A673 (cell line): ENCODE measurements at regions of chr20 and their contacts with region 1.

Region 1: GRCh38 chr20:12970372-12970821 is 38.4 kb upstream of the SPTLC3 start:
- DNase-seq: peak; percentile 50
- H3K4me3 ChIP-seq: no peak overlapping the region
- H3K27ac ChIP-seq: no peak overlapping the region
- H3K4me1 ChIP-seq: no peaks in the 10 kb centered on the region
- H3K27me3 ChIP-seq: no peaks in the 10 kb centered on the region
- CTCF ChIP-seq: peak; percentile 58

Region 2: GRCh38 chr20:13022401-13023155 is 52.2 kb after region 1 on chr20:
- CTCF ChIA-PET with region 1: no interaction called
- POLR2A ChIA-PET with region 1: no interaction called
- intact Hi-C with region 1: no loop called
- DNase-seq: no peak
- H3K4me3 ChIP-seq: no peak overlapping the region
- H3K27ac ChIP-seq: no peak overlapping the region
- H3K4me1 ChIP-seq: no peaks in the 10 kb centered on the region
- H3K27me3 ChIP-seq: no peaks in the 10 kb centered on the region
- CTCF ChIP-seq: no peak

Region 3: DNA sequence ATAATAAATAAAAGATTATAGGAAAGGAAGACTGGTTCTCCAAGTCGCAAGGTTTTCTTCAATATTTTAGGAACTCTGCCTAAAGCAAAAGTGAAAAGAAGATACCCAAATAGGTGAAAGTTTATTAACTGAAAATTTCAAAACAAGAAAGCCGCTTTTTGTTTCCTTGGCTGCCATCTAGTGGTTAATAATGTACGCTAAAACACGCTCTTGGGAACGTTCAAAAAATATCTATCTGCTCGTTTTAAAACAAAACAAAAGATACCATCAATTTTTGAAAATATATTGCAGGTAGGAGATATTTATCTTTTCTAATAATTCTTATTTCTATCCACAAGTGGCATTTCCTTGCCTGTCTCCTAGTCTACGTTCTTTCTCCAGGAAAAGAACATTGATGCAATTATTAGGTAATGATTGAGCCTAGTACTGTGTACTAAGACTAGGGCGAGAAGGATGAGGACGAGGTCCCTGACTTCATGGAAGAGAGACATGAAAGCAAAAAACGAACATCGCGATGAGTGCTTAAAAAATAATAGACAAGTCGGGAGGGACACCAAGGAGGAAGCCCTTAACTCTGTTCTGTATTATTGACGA is 135.6 kb after region 1 on chr20:
- CTCF ChIA-PET with region 1: no interaction called
- POLR2A ChIA-PET with region 1: no interaction called
- intact Hi-C with region 1: loop called (anchors 1 kb)
- DNase-seq: peak; percentile 56
- H3K4me3 ChIP-seq: no peak overlapping the region
- H3K27ac ChIP-seq: no peak overlapping the region
- H3K4me1 ChIP-seq: peaks cover 10% of the 10 kb centered on the region
- H3K27me3 ChIP-seq: no peaks in the 10 kb centered on the region
- CTCF ChIP-seq: peak; percentile 78

Region 4: GRCh38 chr20:13261460-13262301 is 291.3 kb after region 1 on chr20:
- CTCF ChIA-PET with region 1: no interaction called
- POLR2A ChIA-PET with region 1: no interaction called
- intact Hi-C with region 1: loop called (anchors 5 kb)
- DNase-seq: peak; percentile 60
- H3K4me3 ChIP-seq: no peak overlapping the region
- H3K27ac ChIP-seq: no peak overlapping the region
- H3K4me1 ChIP-seq: no peaks in the 10 kb centered on the region
- H3K27me3 ChIP-seq: no peaks in the 10 kb centered on the region
- CTCF ChIP-seq: peak; percentile 75